ENCODE measurements at regions of chr1 and their contacts with region 1.

Region 1: GRCh38 chr1:26677306-26678115 is 18.3 kb upstream of the ARID1A start:
- DNase-seq: peak; percentile 84
- H3K4me3 Mint-ChIP-seq: no peak overlapping the region
- H3K27ac Mint-ChIP-seq: peak overlapping the region; percentile 21
- H3K4me1 Mint-ChIP-seq: peaks cover 16% of the 10 kb centered on the region
- H3K27me3 Mint-ChIP-seq: no peaks in the 10 kb centered on the region

Region 2: GRCh38 chr1:26608895-26609294 is 68.6 kb before region 1 on chr1:
- CTCF ChIA-PET with region 1: interaction called, 28 read pairs
- intact Hi-C with region 1: no loop called
- DNase-seq: no peak
- H3K4me3 Mint-ChIP-seq: no peak overlapping the region
- H3K27ac Mint-ChIP-seq: no peak overlapping the region
- H3K4me1 Mint-ChIP-seq: no peaks in the 10 kb centered on the region
- H3K27me3 Mint-ChIP-seq: peaks cover under 1% of the 10 kb centered on the region

Region 3: GRCh38 chr1:26666855-26667254 is 10.7 kb before region 1 on chr1:
- CTCF ChIA-PET with region 1: interaction called, 11 read pairs
- intact Hi-C with region 1: no loop called
- DNase-seq: peak; percentile 38
- H3K4me3 Mint-ChIP-seq: no peak overlapping the region
- H3K27ac Mint-ChIP-seq: no peak overlapping the region
- H3K4me1 Mint-ChIP-seq: peaks cover 7% of the 10 kb centered on the region
- H3K27me3 Mint-ChIP-seq: no peaks in the 10 kb centered on the region

Region 4: GRCh38 chr1:26695356-26696118 is 18.0 kb after region 1 on chr1 and contains the start of gene ARID1A:
- CTCF ChIA-PET with region 1: interaction called, 23 read pairs
- intact Hi-C with region 1: loop called (anchors 1 kb)
- DNase-seq: peak; percentile 95
- H3K4me3 Mint-ChIP-seq: peak within 1 kb of the TSS; percentile 81
- H3K27ac Mint-ChIP-seq: peak within 1 kb of the TSS; percentile 91
- H3K4me1 Mint-ChIP-seq: peaks cover 22% of the 10 kb centered on the region
- H3K27me3 Mint-ChIP-seq: no peaks in the 10 kb centered on the region
- total RNA-seq, gene ARID1A: 65.0 to 65.9 TPM

Region 5: GRCh38 chr1:26700711-26701110 is 23.2 kb after region 1 on chr1:
- CTCF ChIA-PET with region 1: interaction called, 17 read pairs
- intact Hi-C with region 1: no loop called
- DNase-seq: peak; percentile 44
- H3K4me3 Mint-ChIP-seq: no peak overlapping the region
- H3K27ac Mint-ChIP-seq: no peak overlapping the region
- H3K4me1 Mint-ChIP-seq: peaks cover 8% of the 10 kb centered on the region
- H3K27me3 Mint-ChIP-seq: no peaks in the 10 kb centered on the region

Region 6: DNA sequence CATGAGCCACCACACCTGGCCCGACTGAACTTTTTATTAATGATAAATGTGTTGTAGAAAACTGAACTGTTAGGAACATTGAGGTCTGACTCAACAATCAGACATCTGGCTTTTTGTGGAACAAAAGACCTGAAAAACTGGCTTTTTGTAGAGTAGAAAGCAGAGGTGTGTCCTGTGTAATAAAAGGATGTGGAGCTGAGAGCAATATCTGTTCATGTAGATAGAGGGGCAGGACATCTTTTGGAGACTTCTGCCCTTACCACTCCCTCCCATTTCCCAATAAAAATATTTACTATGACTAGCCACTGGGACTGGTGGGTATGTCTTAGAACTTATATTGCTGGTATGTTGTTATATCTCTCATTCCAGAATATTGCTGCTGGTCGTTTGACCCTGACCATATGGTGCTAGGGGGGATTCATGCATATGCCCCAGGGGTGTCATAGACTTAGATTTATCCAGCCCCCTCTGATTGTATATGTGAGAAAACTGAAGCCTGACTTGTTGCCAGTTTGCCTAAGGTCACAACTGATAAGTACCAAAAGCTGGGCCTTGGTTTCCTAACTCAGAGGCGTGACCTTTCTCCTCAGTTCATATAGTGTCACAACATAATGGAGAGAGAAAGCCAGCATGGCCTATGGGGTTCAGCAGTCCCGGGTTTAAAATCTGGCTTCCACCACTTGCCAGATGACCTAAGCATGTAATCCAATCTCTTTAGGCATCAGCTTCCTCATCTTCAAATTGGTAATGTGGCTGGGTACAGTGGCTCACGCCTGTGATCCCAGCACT is 76.8 kb after region 1 on chr1:
- CTCF ChIA-PET with region 1: no interaction called
- intact Hi-C with region 1: no loop called
- DNase-seq: no peak
- H3K4me3 Mint-ChIP-seq: no peak overlapping the region
- H3K27ac Mint-ChIP-seq: no peak overlapping the region
- H3K4me1 Mint-ChIP-seq: peaks cover 53% of the 10 kb centered on the region
- H3K27me3 Mint-ChIP-seq: no peaks in the 10 kb centered on the region

Measured in activated naive CD4-positive, alpha-beta T cell treated with anti-CD3 and anti-CD28 coated beads for 36 hours (primary cell).